ENCODE measurements at regions of chr22 and their contacts with region 1.

Region 1: GRCh38 chr22:19909350-19910179 is 32.0 kb upstream of the COMT start:
- DNase-seq: peak; percentile 62
- H3K4me3 Mint-ChIP-seq: no peak overlapping the region
- H3K27ac Mint-ChIP-seq: peak overlapping the region; percentile 20
- H3K4me1 Mint-ChIP-seq: peaks cover 6% of the 10 kb centered on the region
- H3K27me3 Mint-ChIP-seq: no peaks in the 10 kb centered on the region

Region 2: GRCh38 chr22:19730655-19731360 is 178.8 kb before region 1 on chr22:
- intact Hi-C with region 1: loop called (anchors 1 kb)
- DNase-seq: peak; percentile 65
- H3K4me3 Mint-ChIP-seq: peak overlapping the region; percentile 43
- H3K27ac Mint-ChIP-seq: no peak overlapping the region
- H3K4me1 Mint-ChIP-seq: no peaks in the 10 kb centered on the region
- H3K27me3 Mint-ChIP-seq: no peaks in the 10 kb centered on the region

Region 3: DNA sequence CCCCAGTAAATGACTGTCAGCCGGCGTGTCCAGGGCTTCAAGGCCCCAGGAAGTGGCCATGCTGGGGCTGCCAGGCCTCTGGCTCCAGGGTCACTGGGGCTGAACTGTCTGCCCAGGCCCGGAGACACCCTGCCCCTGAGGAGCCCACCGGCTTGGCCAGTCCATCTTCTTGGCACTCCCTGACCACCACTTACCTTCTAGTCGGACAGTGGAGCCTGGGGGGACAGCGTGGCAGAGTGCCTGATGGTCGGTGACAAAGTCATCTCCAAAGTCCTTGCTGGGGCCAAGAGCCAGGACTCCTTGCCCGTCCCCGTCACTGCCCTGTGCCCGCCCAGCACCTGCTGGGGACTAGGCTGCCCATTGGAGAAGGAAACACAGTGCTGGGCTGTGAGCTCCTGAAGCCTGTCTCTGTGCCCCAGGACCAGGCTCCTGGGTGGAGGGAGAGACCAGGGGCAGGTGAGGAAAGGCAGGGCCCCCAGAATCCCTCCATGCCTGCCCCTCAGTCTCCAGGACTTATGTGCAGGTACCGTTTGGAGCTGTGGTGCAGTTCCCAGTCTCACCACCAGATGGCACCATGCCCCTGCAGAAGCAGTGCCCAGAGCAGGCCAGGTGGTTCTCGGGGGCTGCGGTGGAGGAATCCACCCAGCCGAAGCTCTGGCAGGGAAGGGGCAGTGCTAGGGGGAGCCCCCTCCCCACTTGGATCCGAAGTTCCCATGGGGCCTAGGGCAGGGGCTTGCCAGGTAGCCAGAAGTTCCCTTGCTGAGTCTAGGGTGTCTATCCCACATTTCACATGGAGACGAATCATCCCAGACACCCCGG is 247.3 kb after region 1 on chr22:
- intact Hi-C with region 1: no loop called
- DNase-seq: peak; percentile 74
- H3K4me3 Mint-ChIP-seq: no peak overlapping the region
- H3K27ac Mint-ChIP-seq: no peak overlapping the region
- H3K4me1 Mint-ChIP-seq: no peaks in the 10 kb centered on the region
- H3K27me3 Mint-ChIP-seq: peaks cover 4% of the 10 kb centered on the region

Region 4: GRCh38 chr22:20238536-20238900 is 329.0 kb after region 1 on chr22:
- intact Hi-C with region 1: no loop called
- DNase-seq: peak; percentile 45
- H3K4me3 Mint-ChIP-seq: no peak overlapping the region
- H3K27ac Mint-ChIP-seq: no peak overlapping the region
- H3K4me1 Mint-ChIP-seq: peaks cover 3% of the 10 kb centered on the region
- H3K27me3 Mint-ChIP-seq: no peaks in the 10 kb centered on the region